ENCODE measurements at regions of chr17 and their contacts with region 1.

Region 1: DNA sequence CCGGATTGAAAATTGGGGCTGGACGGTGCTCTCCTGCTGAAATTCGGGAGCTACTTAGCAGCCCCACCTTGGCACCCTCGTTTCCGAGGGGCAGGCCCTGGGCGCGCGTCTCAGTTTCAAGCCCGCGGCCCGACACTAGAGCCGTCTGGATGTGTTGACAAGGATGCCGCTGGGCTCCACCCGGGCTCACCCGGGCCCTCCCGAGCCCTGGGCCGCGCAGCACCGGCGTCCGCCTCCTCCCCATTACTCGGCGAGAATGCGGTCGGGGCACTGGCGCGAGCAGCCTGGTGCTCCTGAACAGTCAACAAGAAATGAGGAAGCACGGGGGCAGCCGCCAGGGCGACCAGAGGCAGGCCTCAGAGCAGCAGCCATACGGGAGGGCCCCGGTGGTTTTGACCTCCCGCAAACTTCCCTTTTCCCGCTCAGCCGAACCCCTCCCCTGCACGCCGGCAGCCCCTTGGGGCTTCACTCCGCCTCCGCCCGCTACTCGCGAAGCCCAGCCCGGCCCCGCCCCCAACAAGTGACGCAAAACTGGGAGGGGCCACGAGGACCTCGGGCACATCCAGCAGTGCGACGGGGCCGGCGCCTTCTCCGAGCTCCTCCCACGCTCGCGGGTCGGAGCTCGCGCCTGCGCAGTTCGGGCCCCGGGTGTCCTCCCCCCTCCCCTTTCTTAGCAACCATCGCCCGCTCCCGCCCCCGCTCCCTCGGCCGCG is 447 bp upstream of the SEC14L1 start:
- DNase-seq: peak; percentile 100
- ATAC-seq: peak; percentile 79
- H3K4me3 Mint-ChIP-seq: peak overlapping the region; percentile 68
- H3K27ac Mint-ChIP-seq: peak overlapping the region; percentile 93
- H3K4me1 Mint-ChIP-seq: peaks cover 51% of the 10 kb centered on the region
- H3K27me3 Mint-ChIP-seq: no peaks in the 10 kb centered on the region

Region 2: GRCh38 chr17:76671123-76671911 is 469.0 kb before region 1 on chr17:
- CTCF ChIA-PET with region 1: no interaction called
- POLR2A ChIA-PET with region 1: no interaction called
- intact Hi-C with region 1: loop called in 1 of 2 experiments (anchors 1 kb)
- DNase-seq: peak; percentile 100
- ATAC-seq: peak; percentile 100
- H3K4me3 Mint-ChIP-seq: peak overlapping the region; percentile 87
- H3K27ac Mint-ChIP-seq: peak overlapping the region; percentile 95
- H3K4me1 Mint-ChIP-seq: peaks cover 25% of the 10 kb centered on the region
- H3K27me3 Mint-ChIP-seq: no peaks in the 10 kb centered on the region

Region 3: GRCh38 chr17:76753061-76753961 is 387.0 kb before region 1 on chr17:
- CTCF ChIA-PET with region 1: no interaction called
- POLR2A ChIA-PET with region 1: interaction called, 14 read pairs
- intact Hi-C with region 1: no loop called
- DNase-seq: peak; percentile 43
- ATAC-seq: peak; percentile 90
- H3K4me3 Mint-ChIP-seq: peak overlapping the region; percentile 82
- H3K27ac Mint-ChIP-seq: peak overlapping the region; percentile 97
- H3K4me1 Mint-ChIP-seq: peaks cover 23% of the 10 kb centered on the region
- H3K27me3 Mint-ChIP-seq: no peaks in the 10 kb centered on the region

Region 4: GRCh38 chr17:77088455-77089123 is 51.7 kb before region 1 on chr17:
- CTCF ChIA-PET with region 1: interaction called, 17 read pairs
- POLR2A ChIA-PET with region 1: interaction called, 24 read pairs
- intact Hi-C with region 1: loop called (anchors 1 to 5 kb)
- DNase-seq: peak; percentile 89
- ATAC-seq: peak; percentile 83
- H3K4me3 Mint-ChIP-seq: peak overlapping the region; percentile 98
- H3K27ac Mint-ChIP-seq: peak overlapping the region; percentile 97
- H3K4me1 Mint-ChIP-seq: peaks cover 50% of the 10 kb centered on the region
- H3K27me3 Mint-ChIP-seq: no peaks in the 10 kb centered on the region

Region 5: DNA sequence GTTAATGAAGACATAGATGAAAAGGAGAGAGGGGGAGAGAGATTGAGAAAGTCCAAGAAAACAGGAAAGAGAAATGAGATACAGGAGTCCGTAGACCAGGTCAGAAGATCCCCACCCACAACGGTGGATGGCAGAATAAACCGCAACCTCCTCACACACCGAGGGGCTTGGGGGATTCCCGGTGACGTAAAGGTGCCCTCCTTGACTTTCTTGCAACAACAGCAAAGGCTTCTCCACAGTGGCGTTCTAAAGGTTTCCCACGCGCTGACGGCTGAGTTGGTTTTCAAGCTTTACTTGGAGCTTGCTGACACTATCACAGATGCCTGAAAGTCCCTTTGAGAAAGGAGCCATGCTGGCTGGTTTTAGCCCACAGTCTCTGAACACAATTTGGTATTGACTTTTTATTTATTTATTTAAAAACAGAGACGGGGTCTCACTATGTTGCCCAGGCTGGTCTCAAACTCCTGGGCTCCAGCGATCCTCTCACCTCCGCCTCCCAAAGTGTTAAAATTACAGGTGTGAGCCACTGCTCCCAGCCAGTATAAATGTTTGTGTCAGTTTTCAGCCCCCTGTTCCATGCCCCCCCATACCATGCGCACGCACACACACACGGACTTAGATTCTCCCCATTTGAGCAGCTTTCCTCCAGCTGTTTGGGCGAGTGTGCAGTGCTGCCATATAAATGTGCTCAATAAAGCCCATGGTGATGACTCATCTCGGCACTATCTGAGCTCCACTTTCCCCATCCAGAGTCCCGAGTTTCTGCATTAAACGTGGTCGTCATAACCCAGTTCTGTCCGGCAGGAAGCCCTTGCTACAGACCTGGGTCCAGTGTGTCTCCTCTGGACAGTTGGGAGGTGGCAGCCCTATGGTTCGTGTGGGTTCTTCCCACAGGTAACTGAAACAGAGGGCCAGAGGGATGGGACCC is 32.6 kb before region 1 on chr17:
- CTCF ChIA-PET with region 1: no interaction called
- POLR2A ChIA-PET with region 1: no interaction called
- intact Hi-C with region 1: no loop called
- DNase-seq: no peak
- ATAC-seq: no peak
- H3K4me3 Mint-ChIP-seq: no peak overlapping the region
- H3K27ac Mint-ChIP-seq: no peak overlapping the region
- H3K4me1 Mint-ChIP-seq: peaks cover 15% of the 10 kb centered on the region
- H3K27me3 Mint-ChIP-seq: no peaks in the 10 kb centered on the region

Region 6: DNA sequence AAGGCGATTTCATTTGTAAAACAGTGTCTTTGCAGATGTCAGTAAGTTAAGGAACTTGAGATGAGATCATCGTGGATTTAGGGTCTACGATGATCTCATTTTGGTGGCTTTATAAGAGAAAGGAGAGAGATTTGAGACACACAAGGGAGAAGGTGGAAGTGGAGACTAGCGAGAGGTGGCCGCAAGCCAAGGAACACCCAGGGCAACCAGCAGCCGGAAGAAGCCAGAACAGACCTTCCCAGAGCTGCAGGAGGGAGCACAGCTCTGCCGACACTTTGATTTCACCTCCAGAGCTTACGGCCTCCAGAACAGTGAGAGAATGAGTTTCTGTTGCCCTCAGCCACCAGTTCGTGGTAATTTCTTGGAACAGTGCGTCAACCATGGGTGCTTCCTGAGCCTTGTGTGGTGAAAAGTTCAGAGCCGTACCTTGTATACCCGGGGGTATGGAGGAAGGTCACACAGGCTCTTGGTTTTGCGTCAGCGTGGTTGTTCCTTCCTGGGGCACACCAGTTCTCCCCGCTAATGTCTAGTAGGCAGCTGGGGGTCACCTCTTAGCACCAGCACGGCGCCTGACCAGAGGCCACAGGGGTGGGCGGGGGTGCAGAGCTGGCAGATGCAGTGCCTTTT is 12.5 kb before region 1 on chr17:
- CTCF ChIA-PET with region 1: interaction called, 5 read pairs
- POLR2A ChIA-PET with region 1: interaction called, 15 read pairs
- intact Hi-C with region 1: loop called in 1 of 2 experiments (anchors 2 kb)
- DNase-seq: peak; percentile 81
- ATAC-seq: peak; percentile 96
- H3K4me3 Mint-ChIP-seq: peak overlapping the region; percentile 67
- H3K27ac Mint-ChIP-seq: peak overlapping the region; percentile 94
- H3K4me1 Mint-ChIP-seq: peaks cover 30% of the 10 kb centered on the region
- H3K27me3 Mint-ChIP-seq: no peaks in the 10 kb centered on the region

Region 7: GRCh38 chr17:77233635-77234334 is 93.5 kb after region 1 on chr17:
- CTCF ChIA-PET with region 1: interaction called, 4 read pairs
- POLR2A ChIA-PET with region 1: interaction called, 7 read pairs
- intact Hi-C with region 1: loop called in 1 of 2 experiments (anchors 1 kb)
- DNase-seq: peak; percentile 70
- ATAC-seq: peak; percentile 87
- H3K4me3 Mint-ChIP-seq: no peak overlapping the region
- H3K27ac Mint-ChIP-seq: no peak overlapping the region
- H3K4me1 Mint-ChIP-seq: peaks cover 26% of the 10 kb centered on the region
- H3K27me3 Mint-ChIP-seq: no peaks in the 10 kb centered on the region

Region 8: DNA sequence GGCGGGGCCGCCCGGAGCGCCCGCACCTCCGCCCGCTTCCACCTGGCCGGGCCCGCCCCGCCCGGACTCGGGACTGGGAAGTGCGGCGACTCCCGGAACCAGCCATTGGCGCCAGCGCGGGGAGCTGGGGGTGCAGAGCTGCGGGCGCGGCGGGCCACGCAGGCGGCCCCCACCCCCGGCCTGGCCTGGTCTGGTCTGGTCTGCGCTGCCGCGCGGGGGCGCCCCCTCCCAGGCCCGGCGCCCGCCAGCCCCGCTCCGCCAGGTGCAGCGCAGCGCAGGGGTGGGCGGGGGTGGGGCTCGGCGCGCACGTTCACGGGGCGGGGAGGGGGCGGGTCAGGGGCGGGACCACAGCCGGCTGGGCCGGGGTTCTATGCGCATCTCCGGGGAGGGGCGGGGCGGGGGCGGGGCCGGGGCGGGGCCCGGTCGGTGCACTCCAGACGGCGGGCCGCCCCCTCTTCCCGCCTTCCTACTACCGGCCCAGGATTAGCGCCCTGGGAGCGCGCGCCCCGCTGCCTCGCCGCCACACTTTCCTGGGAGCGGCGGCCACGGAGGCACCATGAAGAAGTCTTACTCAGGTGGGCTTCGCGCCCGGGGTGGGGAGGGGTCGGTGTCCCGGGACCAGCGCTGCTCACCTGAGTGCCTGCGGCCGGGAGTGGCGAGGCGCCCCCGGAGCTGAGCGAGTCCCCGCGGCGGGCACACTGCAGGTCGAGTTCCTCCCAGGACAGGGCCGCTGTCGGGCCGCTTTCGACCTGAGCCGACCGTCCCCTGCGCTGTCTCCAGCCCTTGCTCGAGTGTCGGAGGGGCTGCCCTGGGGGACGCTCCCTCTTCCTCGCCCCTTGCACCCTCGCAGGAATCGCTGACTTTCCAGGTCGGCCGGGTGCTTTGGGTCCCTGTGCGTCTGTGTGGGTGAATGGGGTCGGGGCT is 140.9 kb after region 1 on chr17:
- CTCF ChIA-PET with region 1: no interaction called
- POLR2A ChIA-PET with region 1: no interaction called
- intact Hi-C with region 1: loop called in 1 of 2 experiments (anchors 1 kb)
- DNase-seq: peak; percentile 79
- ATAC-seq: peak; percentile 90
- H3K4me3 Mint-ChIP-seq: peak overlapping the region; percentile 68
- H3K27ac Mint-ChIP-seq: peak overlapping the region; percentile 51
- H3K4me1 Mint-ChIP-seq: peaks cover 20% of the 10 kb centered on the region
- H3K27me3 Mint-ChIP-seq: peaks cover 14% of the 10 kb centered on the region